Thyroid gland (tissue), 4 donors: ENCODE measurements at regions of chr6 and their contacts with region 1.

Region 1: GRCh38 chr6:90586836-90587638 is at the start of gene MAP3K7:
- DNase-seq: peak; percentile 92
- H3K4me3 ChIP-seq: peak within 1 kb of the TSS; percentile 83 to 100 (median 98)
- H3K27ac ChIP-seq: peak within 1 kb of the TSS; percentile 88 to 95 (median 88)
- H3K4me1 ChIP-seq: peaks cover 17 to 24% of the 10 kb centered on the region in 2 donors
- H3K27me3 ChIP-seq: no peaks in the 10 kb centered on the region
- CTCF ChIP-seq: no peak
- POLR2A ChIP-seq: peak in 1 of 2 donors; percentile 80
- total RNA-seq, gene MAP3K7: 31.5 to 50.3 (median 33.6) TPM

Region 2: GRCh38 chr6:88963139-88964090 is 1623.6 kb before region 1 on chr6 and contains the start of gene RNGTT:
- intact Hi-C with region 1: loop called (anchors 10 kb)
- DNase-seq: peak; percentile 99
- H3K4me3 ChIP-seq: peak within 1 kb of the TSS; percentile 51 to 94 (median 85)
- H3K27ac ChIP-seq: peak within 1 kb of the TSS; percentile 64 to 79 (median 70)
- H3K4me1 ChIP-seq: peaks cover 14 to 18% of the 10 kb centered on the region in 2 donors
- H3K27me3 ChIP-seq: no peaks in the 10 kb centered on the region
- CTCF ChIP-seq: peak in 1 of 6 experiments; percentile 8
- POLR2A ChIP-seq: peak in 1 of 2 donors; percentile 72
- total RNA-seq, gene RNGTT: 19.1 to 31.4 (median 24.8) TPM

Region 3: DNA sequence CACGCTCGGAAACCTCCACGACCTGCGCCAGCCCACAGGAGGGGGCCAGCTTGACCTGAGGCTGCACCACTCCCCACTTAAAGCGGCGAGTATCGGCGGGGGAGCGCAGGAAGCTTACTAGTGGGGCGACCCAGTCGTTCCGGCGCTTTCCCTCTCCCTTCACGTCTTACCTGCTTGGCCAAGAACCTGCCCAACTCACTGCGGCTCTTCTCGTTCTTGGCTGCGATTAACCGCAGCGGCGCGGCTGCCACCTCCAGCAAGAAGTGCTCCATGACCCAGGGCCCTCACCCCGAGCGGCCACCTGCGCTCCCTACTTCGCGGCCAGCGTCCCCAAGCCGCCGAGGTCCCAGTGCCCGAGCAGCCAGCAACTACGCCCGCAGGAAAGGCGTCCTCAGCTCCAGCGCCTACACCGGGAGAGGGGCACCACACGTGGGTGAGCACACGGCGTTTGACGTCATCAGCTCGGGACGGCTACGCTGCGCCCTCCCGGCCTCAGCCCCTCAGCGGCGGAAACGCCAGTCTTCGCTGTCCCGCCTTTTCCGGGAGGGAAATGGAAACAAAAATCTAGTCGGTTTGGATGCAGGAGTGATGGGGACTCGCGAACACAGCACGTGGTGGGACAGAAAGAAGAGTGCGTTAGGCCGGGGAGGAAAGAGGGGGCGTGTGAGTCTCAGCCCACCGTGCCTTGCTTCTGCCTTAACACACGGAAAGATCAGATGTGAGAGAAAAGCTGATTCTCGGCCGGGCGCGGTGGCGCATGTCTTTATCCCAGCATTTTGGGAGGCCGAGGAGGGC is 767.5 kb before region 1 on chr6 and contains the start of gene MDN1:
- intact Hi-C with region 1: loop called (anchors 10 kb)
- DNase-seq: peak; percentile 91 to 94
- H3K4me3 ChIP-seq: peak within 1 kb of the TSS; percentile 59 to 78 (median 59)
- H3K27ac ChIP-seq: peak within 1 kb of the TSS; percentile 84 to 92 (median 88)
- H3K4me1 ChIP-seq: peaks cover 11 to 13% of the 10 kb centered on the region in 2 donors
- H3K27me3 ChIP-seq: no peaks in the 10 kb centered on the region
- CTCF ChIP-seq: no peak
- POLR2A ChIP-seq: peak in 1 of 2 donors; percentile 89
- total RNA-seq, gene MDN1: 32.0 to 44.7 (median 40.1) TPM